A673 (cell line): ENCODE measurements at regions of chr19 and their contacts with region 1.

Region 1: DNA sequence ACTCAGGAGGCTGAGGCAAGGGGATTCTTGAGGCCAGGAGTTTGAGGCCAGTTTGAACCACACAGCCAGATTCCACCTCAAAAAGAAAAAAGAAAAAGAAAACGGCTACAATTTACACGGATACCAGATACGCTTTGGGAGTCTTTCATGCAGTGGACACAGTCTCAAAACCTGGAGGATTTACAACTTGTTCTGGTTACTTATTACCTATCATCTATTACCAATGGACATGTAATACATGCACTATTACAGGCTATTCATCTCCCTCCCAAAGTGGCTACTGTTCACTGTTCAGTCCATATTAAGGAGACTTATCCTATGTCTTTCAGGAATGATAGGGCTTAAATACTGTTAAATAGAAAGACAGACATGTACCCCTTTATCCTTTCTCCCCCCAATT is 33.3 kb downstream of the ZNF823 start:
- DNase-seq: no peak
- H3K4me3 ChIP-seq: no peak overlapping the region
- H3K27ac ChIP-seq: no peak overlapping the region
- H3K4me1 ChIP-seq: no peaks in the 10 kb centered on the region
- H3K27me3 ChIP-seq: no peaks in the 10 kb centered on the region
- CTCF ChIP-seq: no peak

Region 2: DNA sequence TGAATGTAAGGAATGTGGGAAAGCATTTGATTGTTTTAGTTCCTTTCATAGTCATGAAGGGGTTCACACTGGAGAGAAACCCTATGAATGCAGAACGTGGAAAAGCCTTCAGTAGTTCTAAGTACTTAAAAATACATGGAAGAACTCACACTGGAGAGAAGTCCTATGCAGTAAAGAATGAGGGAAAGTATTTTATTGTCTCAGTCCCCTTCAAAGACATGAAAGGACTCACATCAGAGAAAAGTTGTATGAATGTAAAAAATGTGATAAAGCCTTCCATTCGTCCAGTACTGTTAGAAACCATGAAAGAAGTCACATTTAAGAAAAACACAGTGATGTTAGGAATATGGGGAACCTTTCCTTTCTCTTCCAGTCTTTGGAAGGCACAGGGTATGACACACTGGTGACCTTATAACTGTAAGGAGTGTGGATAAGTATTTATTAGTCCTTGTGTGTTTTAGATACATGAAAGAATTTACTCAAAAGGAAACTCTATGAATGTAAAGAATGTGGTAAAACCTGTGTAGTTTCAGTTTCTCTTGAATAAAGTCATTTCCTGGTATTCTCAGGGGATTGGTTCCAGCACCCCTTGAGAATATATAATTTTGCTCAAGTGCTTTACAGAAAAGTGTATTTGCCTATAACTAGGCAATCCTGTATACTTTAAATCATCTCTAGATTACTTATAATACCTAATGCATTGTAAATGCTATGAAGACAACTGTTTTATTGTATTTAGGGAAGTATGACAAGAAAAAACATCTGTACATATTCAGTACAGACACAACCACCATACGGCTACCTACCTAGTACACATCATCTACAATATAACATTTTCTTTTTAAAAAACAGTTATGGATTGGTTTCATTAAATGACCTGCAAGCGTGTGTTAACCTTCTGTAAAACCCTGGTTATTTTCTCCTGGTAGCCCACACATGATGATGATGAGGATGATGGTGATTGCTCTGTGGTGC is 19.5 kb before region 1 on chr19:
- CTCF ChIA-PET with region 1: interaction called, 14 read pairs
- POLR2A ChIA-PET with region 1: no interaction called
- intact Hi-C with region 1: no loop called
- DNase-seq: no peak
- H3K4me3 ChIP-seq: no peak overlapping the region
- H3K27ac ChIP-seq: no peak overlapping the region
- H3K4me1 ChIP-seq: no peaks in the 10 kb centered on the region
- H3K27me3 ChIP-seq: no peaks in the 10 kb centered on the region
- CTCF ChIP-seq: no peak